ENCODE measurements at regions of chr1 and their contacts with region 1.

Region 1: DNA sequence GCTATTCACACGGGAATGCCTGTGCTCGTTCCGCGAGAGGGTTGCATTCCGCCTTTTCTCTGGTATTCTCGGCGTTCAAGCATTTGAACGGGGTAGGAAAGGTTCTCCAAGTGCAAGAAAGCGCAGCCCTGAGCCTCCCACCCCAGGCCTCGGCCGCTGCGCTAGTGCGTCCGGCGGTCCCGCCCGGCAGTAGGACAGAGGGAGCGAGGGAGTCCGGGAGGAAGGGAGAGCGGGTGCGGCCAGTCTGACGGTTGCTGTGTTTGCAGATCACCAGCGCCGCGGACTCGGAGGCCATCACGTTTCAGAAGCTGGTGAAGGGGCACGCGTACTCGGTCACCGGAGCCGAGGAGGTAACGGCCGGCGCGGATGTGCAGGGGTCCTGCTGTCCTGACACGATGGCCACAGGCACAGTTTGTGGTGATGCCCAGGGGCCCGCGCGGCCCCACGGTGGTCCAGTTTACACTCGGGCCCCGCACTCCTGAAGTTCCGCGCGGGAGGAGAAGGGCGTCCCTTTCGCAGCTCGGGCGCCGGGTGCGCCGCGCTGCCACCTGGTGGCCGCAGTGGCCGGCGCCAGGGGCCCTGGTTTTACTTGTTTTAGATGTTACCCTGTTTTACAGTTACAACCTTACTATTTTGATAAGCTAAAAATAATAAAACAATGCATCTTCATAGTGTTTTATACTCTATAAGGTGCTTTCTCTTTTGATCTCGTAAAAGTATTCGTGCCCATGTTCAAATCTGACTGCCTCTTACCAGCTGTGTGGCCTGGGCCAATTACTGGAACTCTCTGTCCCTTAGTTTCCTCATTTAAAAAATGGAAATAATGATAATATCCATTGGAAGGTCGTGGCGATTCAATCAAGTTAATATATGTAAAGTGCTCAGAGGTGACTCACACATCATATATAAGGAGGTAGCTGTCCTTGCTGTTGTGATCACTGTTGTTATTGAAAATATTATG is 36.7 kb downstream of the CAPN2 start:
- DNase-seq: peak; percentile 74 to 80 (median 79)
- ATAC-seq: peak; percentile 88
- H3K4me3 ChIP-seq: no peak overlapping the region
- H3K4me1 ChIP-seq: peaks cover 13% of the 10 kb centered on the region
- CTCF ChIP-seq: peak; percentile 82

Region 2: GRCh38 chr1:223695941-223696340 is 53.1 kb before region 1 on chr1:
- intact Hi-C with region 1: loop called (anchors 5 to 10 kb)
- DNase-seq: no peak
- ATAC-seq: no peak
- H3K4me3 ChIP-seq: no peak overlapping the region
- H3K4me1 ChIP-seq: peaks cover 6% of the 10 kb centered on the region
- CTCF ChIP-seq: no peak

Measured in mucosa of descending colon (tissue), 3 donors.